Left cardiac atrium (tissue), 4 donors: ENCODE measurements at regions of chr14 and their contacts with region 1.

Region 1: GRCh38 chr14:74913986-74914573 is 9.0 kb downstream of the RPS6KL1 start:
- DNase-seq: peak; percentile 80
- ATAC-seq: peak; percentile 63 to 65

Region 2: GRCh38 chr14:75081660-75082229 is 167.7 kb after region 1 on chr14:
- intact Hi-C with region 1: loop called in 1 of 2 experiments (anchors 2 kb)
- DNase-seq: no peak
- ATAC-seq: no peak

Region 3: DNA sequence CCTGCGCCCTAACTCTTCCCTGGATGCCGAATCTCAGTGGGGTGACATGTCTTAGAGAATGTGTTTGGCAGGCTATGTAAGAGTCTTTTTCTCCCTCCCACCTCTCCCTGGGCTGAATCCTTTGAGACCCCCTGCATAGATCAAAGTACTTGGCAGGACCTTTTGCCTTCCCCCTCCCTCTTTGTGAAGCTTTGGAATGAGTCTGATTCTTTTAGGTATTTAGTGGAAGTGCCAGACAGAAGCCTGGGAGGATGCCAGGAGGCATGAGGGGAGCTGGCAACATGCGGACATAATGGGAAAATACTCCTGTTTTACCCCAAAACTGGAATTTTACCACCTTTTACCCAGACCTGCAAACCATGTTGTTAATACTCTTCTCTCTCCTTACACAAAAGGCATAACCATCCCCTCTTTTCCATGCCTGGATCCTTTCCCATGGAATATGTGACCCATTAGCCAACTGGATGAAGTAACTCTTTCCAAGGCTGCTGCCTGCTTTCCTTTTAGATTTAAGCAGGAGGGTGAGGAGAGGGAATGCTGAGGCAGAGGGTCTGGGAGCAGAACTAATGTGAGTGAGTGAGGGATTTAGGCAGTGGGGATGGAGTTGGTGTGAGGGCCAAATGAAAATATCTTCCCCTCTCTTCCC is 788.7 kb after region 1 on chr14:
- intact Hi-C with region 1: no loop called
- DNase-seq: no peak
- ATAC-seq: peak; percentile 56